ENCODE measurements at regions of chr2 and their contacts with region 1.

Region 1: DNA sequence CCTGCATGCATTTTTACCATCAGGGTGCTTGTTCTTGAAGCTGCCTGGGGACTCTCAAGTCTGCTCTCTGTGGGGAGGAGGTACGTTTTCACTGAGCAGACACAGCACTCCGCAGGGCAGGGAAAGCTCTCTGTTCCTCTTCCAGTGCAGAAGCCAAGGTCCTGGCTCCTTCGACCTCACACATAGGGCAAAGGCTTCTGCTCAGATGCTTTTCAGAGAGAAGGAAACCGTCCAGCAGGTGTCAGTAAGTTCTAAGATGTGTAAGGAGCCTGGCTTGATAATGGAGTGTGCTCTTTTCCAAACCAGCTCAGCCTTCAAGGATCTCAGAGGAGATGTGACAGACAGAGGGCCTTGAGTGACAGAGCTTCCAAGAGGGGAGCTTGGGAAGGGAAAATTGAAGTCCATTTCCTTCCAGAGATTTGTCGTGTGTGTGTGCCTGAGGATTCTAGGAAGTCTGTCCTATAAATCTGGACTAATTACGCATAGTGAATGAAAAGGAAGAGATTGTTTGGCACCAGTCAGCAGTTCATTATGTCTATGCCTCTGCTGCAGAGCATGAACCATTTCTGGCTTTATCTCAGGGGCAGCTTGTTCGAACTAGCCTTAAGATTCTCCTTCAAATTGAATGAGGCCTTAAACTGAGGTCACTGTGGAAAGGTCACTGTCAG is 67.3 kb upstream of the UPP2 start:
- DNase-seq: peak; percentile 51
- H3K4me3 ChIP-seq: no peak overlapping the region
- H3K27ac ChIP-seq: no peak overlapping the region
- H3K4me1 ChIP-seq: no peaks in the 10 kb centered on the region
- H3K27me3 ChIP-seq: peaks cover 13 to 23% of the 10 kb centered on the region in 2 experiments
- CTCF ChIP-seq: peak; percentile 34 to 45
- POLR2A ChIP-seq: no peak

Region 2: GRCh38 chr2:157809212-157809611 is 225.1 kb before region 1 on chr2:
- CTCF ChIA-PET with region 1: no interaction called
- POLR2A ChIA-PET with region 1: no interaction called
- dilution Hi-C with region 1: no loop called
- intact Hi-C with region 1: no loop called
- DNase-seq: peak; percentile 61
- H3K4me3 ChIP-seq: no peak overlapping the region
- H3K27ac ChIP-seq: no peak overlapping the region
- H3K4me1 ChIP-seq: peaks cover 16% of the 10 kb centered on the region
- H3K27me3 ChIP-seq: no peaks in the 10 kb centered on the region
- CTCF ChIP-seq: no peak
- POLR2A ChIP-seq: no peak

Region 3: GRCh38 chr2:158060862-158061435 is 26.6 kb after region 1 on chr2:
- CTCF ChIA-PET with region 1: no interaction called
- POLR2A ChIA-PET with region 1: no interaction called
- dilution Hi-C with region 1: no loop called
- intact Hi-C with region 1: no loop called
- DNase-seq: no peak
- H3K4me3 ChIP-seq: no peak overlapping the region
- H3K27ac ChIP-seq: no peak overlapping the region
- H3K4me1 ChIP-seq: no peaks in the 10 kb centered on the region
- H3K27me3 ChIP-seq: no peaks in the 10 kb centered on the region
- CTCF ChIP-seq: no peak
- POLR2A ChIP-seq: no peak

Region 4: GRCh38 chr2:158269143-158269542 is 234.8 kb after region 1 on chr2:
- CTCF ChIA-PET with region 1: no interaction called
- POLR2A ChIA-PET with region 1: no interaction called
- dilution Hi-C with region 1: no loop called
- intact Hi-C with region 1: no loop called
- DNase-seq: no peak
- H3K4me3 ChIP-seq: no peak overlapping the region
- H3K27ac ChIP-seq: no peak overlapping the region
- H3K4me1 ChIP-seq: no peaks in the 10 kb centered on the region
- H3K27me3 ChIP-seq: peaks cover 2 to 4% of the 10 kb centered on the region in 2 experiments
- CTCF ChIP-seq: no peak
- POLR2A ChIP-seq: no peak

Region 5: DNA sequence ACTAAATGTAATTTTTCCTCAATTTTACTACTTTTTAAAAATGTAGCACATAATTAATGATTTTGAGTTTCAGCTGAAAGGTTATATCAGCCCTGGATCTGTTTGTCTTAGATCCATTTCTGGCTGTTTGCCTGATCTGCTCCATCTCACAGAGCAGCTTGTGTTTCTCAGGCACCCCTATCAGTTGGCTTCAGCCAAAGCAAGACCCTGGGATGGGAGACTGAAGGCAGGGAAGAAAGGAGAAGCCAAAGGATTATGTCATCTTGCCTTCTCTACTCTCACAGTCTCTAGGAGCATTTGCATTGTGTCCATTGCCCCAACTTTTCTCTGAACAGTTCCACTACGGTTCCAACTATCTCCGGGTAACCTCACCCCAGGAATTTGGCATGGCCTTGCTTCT is 311.7 kb after region 1 on chr2:
- CTCF ChIA-PET with region 1: no interaction called
- POLR2A ChIA-PET with region 1: no interaction called
- dilution Hi-C with region 1: no loop called
- intact Hi-C with region 1: no loop called
- DNase-seq: no peak
- H3K4me3 ChIP-seq: no peak overlapping the region
- H3K27ac ChIP-seq: no peak overlapping the region
- H3K4me1 ChIP-seq: no peaks in the 10 kb centered on the region
- H3K27me3 ChIP-seq: peaks cover 2% of the 10 kb centered on the region in 2 experiments
- CTCF ChIP-seq: no peak
- POLR2A ChIP-seq: no peak

Region 6: GRCh38 chr2:158391876-158392275 is 357.5 kb after region 1 on chr2:
- CTCF ChIA-PET with region 1: no interaction called
- POLR2A ChIA-PET with region 1: no interaction called
- dilution Hi-C with region 1: no loop called
- intact Hi-C with region 1: loop called (anchors 5 kb)
- DNase-seq: peak; percentile 3
- H3K4me3 ChIP-seq: no peak overlapping the region
- H3K27ac ChIP-seq: no peak overlapping the region
- H3K4me1 ChIP-seq: peaks cover 2% of the 10 kb centered on the region
- H3K27me3 ChIP-seq: peaks cover 0 to under 1% of the 10 kb centered on the region in 2 experiments
- CTCF ChIP-seq: no peak
- POLR2A ChIP-seq: no peak